ENCODE measurements at regions of chr4 and their contacts with region 1.

Region 1: GRCh38 chr4:41143311-41144039 is 70.9 kb downstream of the APBB2 start:
- DNase-seq: no peak

Region 2: GRCh38 chr4:40933272-40934053 is 210.0 kb before region 1 on chr4:
- intact Hi-C with region 1: loop called (anchors 5 kb)
- DNase-seq: no peak

Region 3: DNA sequence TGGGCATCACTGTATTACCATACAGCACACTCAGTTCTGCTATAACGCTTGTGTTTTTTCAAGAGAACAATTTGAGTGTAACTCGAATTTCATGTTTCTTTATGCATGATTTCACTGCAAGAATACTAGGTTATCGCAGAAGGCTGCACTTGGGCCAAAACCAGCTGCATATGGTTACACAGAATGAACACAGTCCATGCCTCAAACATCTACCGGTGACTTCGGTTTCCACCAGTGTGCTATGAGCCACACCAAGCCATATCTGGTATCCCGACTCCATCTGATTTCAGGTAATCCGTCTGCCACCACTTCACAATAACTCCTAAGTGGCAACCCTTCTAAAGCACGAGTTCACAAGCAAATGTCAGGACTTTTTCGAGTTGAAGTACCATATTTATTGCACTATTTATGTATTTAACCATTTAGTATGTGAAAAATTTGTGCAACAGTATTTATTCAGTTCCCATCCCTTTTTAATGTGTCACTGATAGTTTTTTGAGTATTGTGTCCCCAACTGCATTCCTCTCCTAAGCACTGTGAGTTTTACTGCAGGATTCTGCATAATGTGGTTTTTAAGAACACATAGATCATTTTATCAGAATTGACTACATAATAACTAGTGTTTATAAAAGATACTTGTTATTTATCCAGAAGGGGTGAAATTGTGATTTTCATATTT is 40.9 kb before region 1 on chr4:
- intact Hi-C with region 1: loop called (anchors 5 kb)
- DNase-seq: no peak

Region 4: GRCh38 chr4:41120297-41121217 is 22.9 kb before region 1 on chr4:
- intact Hi-C with region 1: no loop called
- DNase-seq: no peak

Measured in cardiac septum (tissue), 1 donor.